Caco-2 (cell line): ENCODE measurements at regions of chr6 and their contacts with region 1.

Region 1: GRCh38 chr6:160254467-160255312 is 3.9 kb downstream of the SLC22A2 start:
- DNase-seq: peak; percentile 81 to 90
- H3K4me3 ChIP-seq: peak overlapping the region; percentile 13; the same call in 1 of the 2 replicates
- H3K4me3 Mint-ChIP-seq: peak overlapping the region; percentile 52
- H3K27ac Mint-ChIP-seq: peak overlapping the region; percentile 32
- H3K4me1 ChIP-seq: peaks cover 25% of the 10 kb centered on the region
- H3K4me1 Mint-ChIP-seq: peaks cover 17% of the 10 kb centered on the region
- H3K27me3 ChIP-seq: no peaks in the 10 kb centered on the region
- H3K27me3 Mint-ChIP-seq: no peaks in the 10 kb centered on the region
- CTCF ChIP-seq: peak; percentile 22 to 54

Region 2: GRCh38 chr6:160173806-160174527 is 80.7 kb before region 1 on chr6:
- CTCF ChIA-PET with region 1: no interaction called
- POLR2A ChIA-PET with region 1: no interaction called
- intact Hi-C with region 1: loop called (anchors 2 kb)
- DNase-seq: peak; percentile 51 to 53
- H3K4me3 ChIP-seq: no peak overlapping the region
- H3K4me3 Mint-ChIP-seq: peak overlapping the region; percentile 59
- H3K27ac Mint-ChIP-seq: peak overlapping the region; percentile 63
- H3K4me1 ChIP-seq: peaks cover 30% of the 10 kb centered on the region
- H3K4me1 Mint-ChIP-seq: peaks cover 14% of the 10 kb centered on the region
- H3K27me3 ChIP-seq: no peaks in the 10 kb centered on the region
- H3K27me3 Mint-ChIP-seq: no peaks in the 10 kb centered on the region
- CTCF ChIP-seq: no peak

Region 3: DNA sequence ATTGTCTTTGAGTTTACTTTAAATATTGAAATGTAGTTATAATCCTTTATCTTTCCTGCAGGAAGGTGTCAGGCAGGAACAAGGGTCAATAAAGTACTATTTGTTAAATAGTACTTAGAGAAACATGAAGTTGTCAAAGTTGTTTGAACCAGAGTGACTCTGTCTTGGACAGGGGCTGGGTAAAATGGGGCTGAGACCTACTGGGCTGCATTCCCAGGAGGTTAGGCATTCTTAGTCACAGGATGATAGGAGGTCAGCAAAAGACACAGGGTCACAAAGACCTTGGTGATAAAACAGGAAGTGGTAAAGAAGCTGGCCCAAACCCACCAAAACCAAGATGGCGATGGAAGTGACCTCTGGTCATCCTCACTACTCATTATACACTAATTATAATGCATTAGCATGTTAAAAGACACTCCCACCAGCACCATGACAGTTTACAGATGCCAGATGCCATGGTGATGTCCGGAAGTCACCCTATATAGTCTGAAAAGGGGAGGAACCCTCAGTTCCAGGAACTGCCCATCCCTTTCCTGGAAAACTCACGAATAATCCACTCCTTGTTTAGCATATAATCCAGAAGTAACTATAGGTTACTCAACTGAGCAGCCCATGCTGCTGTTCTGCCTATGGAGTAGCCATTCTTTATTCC is 15.8 kb before region 1 on chr6:
- CTCF ChIA-PET with region 1: no interaction called
- POLR2A ChIA-PET with region 1: no interaction called
- intact Hi-C with region 1: loop called (anchors 2 kb)
- DNase-seq: peak in 1 of 2 experiments; percentile 50
- H3K4me3 ChIP-seq: no peak overlapping the region
- H3K4me3 Mint-ChIP-seq: no peak overlapping the region
- H3K27ac Mint-ChIP-seq: peak overlapping the region; percentile 34
- H3K4me1 ChIP-seq: peaks cover 51% of the 10 kb centered on the region
- H3K4me1 Mint-ChIP-seq: peaks cover 25% of the 10 kb centered on the region
- H3K27me3 ChIP-seq: no peaks in the 10 kb centered on the region
- H3K27me3 Mint-ChIP-seq: no peaks in the 10 kb centered on the region
- CTCF ChIP-seq: no peak

Region 4: DNA sequence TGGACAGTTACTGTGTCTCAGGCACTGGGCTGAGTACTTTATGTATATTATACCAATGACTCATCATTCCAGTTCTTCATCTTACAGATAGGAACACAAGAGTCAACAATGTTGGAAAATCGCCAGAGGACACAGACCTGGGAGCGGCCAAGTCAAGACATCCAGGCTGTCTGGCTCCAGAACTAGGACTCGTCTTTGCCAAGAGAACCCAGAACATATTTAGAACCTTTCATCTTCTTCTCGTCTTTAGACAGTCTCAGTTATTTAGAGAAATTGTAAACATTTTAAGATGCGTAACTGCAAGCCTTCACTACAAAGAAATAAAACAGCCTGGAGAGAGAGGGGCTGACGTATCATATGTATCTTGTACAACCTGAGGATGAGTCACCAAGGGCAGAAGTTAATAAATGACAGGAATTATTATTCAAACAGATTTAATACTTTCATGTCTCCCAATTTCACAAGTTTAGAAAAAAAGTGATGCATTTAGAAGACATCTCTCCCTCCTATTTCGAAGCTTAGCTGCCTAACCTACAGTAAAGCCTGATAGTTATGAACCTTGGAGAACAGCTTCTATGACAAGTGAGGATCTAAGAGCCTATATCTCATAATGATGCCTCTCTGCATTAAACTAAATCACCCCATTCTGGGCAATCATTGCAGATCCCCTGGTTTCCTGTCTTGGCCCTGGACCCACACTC is 136.9 kb after region 1 on chr6:
- CTCF ChIA-PET with region 1: no interaction called
- POLR2A ChIA-PET with region 1: no interaction called
- intact Hi-C with region 1: loop called (anchors 2 kb)
- DNase-seq: peak; percentile 51 to 63
- H3K4me3 ChIP-seq: no peak overlapping the region
- H3K4me3 Mint-ChIP-seq: no peak overlapping the region
- H3K27ac Mint-ChIP-seq: peak overlapping the region; percentile 19
- H3K4me1 ChIP-seq: peaks cover 35% of the 10 kb centered on the region
- H3K4me1 Mint-ChIP-seq: peaks cover 19% of the 10 kb centered on the region
- H3K27me3 ChIP-seq: no peaks in the 10 kb centered on the region
- H3K27me3 Mint-ChIP-seq: no peaks in the 10 kb centered on the region
- CTCF ChIP-seq: no peak